Kidney (tissue), 22 donors: ENCODE measurements at regions of chr17 and their contacts with region 1.

Region 1: DNA sequence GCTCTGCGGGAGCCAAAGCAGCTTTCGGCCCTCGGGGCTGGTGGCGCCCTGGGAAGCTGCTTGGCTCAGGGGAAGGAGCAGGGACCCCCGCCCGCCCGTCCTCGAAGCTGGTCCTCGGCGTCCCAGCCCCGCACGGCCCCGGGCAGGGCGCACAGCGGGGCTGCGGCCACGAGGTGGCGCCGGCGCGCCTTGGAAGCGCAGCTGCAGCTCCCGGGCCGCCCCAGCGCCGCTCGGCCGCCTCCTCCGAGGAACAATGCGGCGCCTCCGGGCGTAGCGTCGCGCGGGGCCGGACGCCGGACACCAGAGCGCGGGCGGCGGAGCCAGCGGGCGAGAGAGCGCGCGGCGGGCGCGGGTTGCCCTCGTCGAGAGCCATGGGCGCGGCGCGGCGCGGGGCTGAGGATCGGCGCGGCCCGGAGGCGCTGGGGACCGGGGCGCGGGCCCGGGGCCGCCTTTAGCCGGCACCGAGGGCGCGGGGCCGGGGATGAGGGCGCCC is at the start of gene MGAT5B:
- DNase-seq: peak; percentile 83 to 93 (median 89)
- H3K4me3 ChIP-seq: no peak within 1 kb of the TSS
- H3K27ac ChIP-seq: no peak within 1 kb of the TSS
- H3K4me1 ChIP-seq: peaks cover 0 to 4% (median 0%) of the 10 kb centered on the region in 3 donors
- H3K27me3 ChIP-seq: peaks cover 2% of the 10 kb centered on the region
- CTCF ChIP-seq: peak; percentile 89
- total RNA-seq, gene MGAT5B: 2.3 TPM

Region 2: DNA sequence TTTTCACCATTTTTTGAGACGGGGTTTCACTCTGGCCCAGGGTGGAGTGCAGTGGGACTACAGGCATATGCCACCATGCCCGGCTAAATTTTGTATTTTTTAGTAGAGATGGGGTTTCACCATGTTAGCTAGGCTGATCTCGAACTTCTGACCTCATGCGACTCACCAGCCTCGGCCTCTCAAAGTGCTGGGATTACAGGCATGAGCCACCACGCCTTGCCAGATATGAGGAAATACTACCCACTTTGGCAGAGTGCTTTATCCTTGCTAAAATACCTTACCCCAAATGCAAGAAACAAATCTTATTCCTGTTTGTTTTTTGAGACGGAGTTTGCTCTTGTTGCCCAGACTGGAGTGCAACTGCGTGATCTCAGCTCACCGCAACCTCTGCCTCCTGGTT is 62.9 kb before region 1 on chr17:
- intact Hi-C with region 1: no loop called
- DNase-seq: no peak
- H3K4me3 ChIP-seq: no peak overlapping the region
- H3K27ac ChIP-seq: no peak overlapping the region
- H3K4me1 ChIP-seq: no peaks in the 10 kb centered on the region
- H3K27me3 ChIP-seq: no peaks in the 10 kb centered on the region
- CTCF ChIP-seq: no peak

Region 3: GRCh38 chr17:76997981-76998531 is 129.8 kb after region 1 on chr17:
- intact Hi-C with region 1: no loop called
- DNase-seq: peak in 2 of 5 donors; percentile 10 to 25
- H3K4me3 ChIP-seq: no peak overlapping the region
- H3K27ac ChIP-seq: no peak overlapping the region
- H3K4me1 ChIP-seq: peaks cover 0 to 2% (median 0%) of the 10 kb centered on the region in 3 donors
- H3K27me3 ChIP-seq: no peaks in the 10 kb centered on the region
- CTCF ChIP-seq: no peak

Region 4: DNA sequence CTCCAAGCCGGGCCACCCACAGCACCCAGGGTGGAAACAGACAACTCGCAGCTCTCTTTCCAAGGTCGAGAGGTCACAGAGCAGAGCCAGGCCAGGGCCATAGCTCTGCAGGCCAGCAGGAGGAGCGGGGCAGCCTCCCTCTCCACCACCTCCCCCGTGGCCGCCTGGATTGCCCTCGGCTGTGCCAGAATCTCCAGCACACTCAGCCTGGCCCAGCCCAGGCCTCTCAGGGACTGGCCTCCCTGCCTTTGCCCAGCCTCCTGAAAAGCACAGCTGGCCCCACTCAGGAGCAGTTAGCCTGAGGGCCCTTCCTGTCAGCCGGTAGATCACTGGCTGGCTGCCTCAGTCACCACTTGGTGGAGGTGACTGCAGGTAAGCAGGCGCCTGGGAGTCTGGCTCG is 186.7 kb after region 1 on chr17:
- intact Hi-C with region 1: no loop called
- DNase-seq: no peak
- H3K4me3 ChIP-seq: no peak overlapping the region
- H3K27ac ChIP-seq: no peak overlapping the region
- H3K4me1 ChIP-seq: no peaks in the 10 kb centered on the region
- H3K27me3 ChIP-seq: no peaks in the 10 kb centered on the region
- CTCF ChIP-seq: no peak

Region 5: GRCh38 chr17:77068915-77069314 is 200.7 kb after region 1 on chr17:
- intact Hi-C with region 1: loop called (anchors 5 kb)
- DNase-seq: no peak
- H3K4me3 ChIP-seq: no peak overlapping the region
- H3K27ac ChIP-seq: no peak overlapping the region
- H3K4me1 ChIP-seq: no peaks in the 10 kb centered on the region
- H3K27me3 ChIP-seq: no peaks in the 10 kb centered on the region
- CTCF ChIP-seq: no peak